Heart left ventricle (tissue), 16 donors: ENCODE measurements at regions of chr17 and their contacts with region 1.

Region 1: DNA sequence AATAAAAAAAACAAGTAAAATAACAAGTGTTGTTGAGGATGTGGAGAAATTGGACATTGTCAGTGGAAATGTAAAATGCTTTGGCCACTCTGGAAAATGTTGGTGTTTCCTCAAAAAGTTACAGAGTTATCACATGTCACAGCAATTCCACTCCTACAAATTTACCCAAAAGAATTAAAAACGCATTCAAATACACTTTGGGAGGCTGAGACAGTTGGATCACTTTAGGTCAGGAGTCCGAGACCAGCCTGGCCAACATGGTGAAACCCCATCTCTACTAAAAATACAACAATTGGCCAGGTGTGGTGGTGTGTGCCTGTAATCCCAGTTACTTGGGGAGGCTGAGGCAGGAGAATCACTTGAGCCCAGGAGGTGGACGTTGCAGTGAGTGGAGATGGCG is 5.6 kb downstream of the TOP3A start:
- DNase-seq: no peak
- ATAC-seq: no peak
- H3K4me3 ChIP-seq: no peak overlapping the region
- H3K27ac ChIP-seq: no peak overlapping the region
- H3K4me1 ChIP-seq: peaks cover 0 to 27% (median 15%) of the 10 kb centered on the region in 12 donors
- H3K27me3 ChIP-seq: no peaks in the 10 kb centered on the region
- CTCF ChIP-seq: no peak
- POLR2A ChIP-seq: no peak

Region 2: GRCh38 chr17:18235743-18236256 is 73.4 kb before region 1 on chr17:
- intact Hi-C with region 1: no loop called
- DNase-seq: no peak
- ATAC-seq: no peak
- H3K4me3 ChIP-seq: no peak overlapping the region
- H3K27ac ChIP-seq: no peak overlapping the region
- H3K4me1 ChIP-seq: peaks cover 0 to 8% (median 0%) of the 10 kb centered on the region in 12 donors
- H3K27me3 ChIP-seq: no peaks in the 10 kb centered on the region
- CTCF ChIP-seq: no peak
- POLR2A ChIP-seq: no peak

Region 3: GRCh38 chr17:18291718-18292540 is 17.3 kb before region 1 on chr17:
- intact Hi-C with region 1: loop called in 1 of 10 experiments (anchors 2 kb)
- DNase-seq: no peak
- ATAC-seq: no peak
- H3K4me3 ChIP-seq: no peak overlapping the region
- H3K27ac ChIP-seq: no peak overlapping the region
- H3K4me1 ChIP-seq: no peaks in the 10 kb centered on the region
- H3K27me3 ChIP-seq: no peaks in the 10 kb centered on the region
- CTCF ChIP-seq: no peak
- POLR2A ChIP-seq: no peak